ENCODE measurements at regions of chr2 and their contacts with region 1.

Region 1: GRCh38 chr2:189179570-189179950 is at the start of gene COL5A2:
- DNase-seq: peak; percentile 90
- H3K4me3 ChIP-seq: peak within 1 kb of the TSS; percentile 54 to 98 (median 76)
- H3K27ac ChIP-seq: peak within 1 kb of the TSS; percentile 65
- H3K4me1 ChIP-seq: peaks cover 15% of the 10 kb centered on the region
- H3K27me3 ChIP-seq: no peaks in the 10 kb centered on the region
- CTCF ChIP-seq: no peak
- POLR2A ChIP-seq: peak; percentile 88
- total RNA-seq, gene COL5A2: 123 and 138 TPM in 2 replicates

Region 2: DNA sequence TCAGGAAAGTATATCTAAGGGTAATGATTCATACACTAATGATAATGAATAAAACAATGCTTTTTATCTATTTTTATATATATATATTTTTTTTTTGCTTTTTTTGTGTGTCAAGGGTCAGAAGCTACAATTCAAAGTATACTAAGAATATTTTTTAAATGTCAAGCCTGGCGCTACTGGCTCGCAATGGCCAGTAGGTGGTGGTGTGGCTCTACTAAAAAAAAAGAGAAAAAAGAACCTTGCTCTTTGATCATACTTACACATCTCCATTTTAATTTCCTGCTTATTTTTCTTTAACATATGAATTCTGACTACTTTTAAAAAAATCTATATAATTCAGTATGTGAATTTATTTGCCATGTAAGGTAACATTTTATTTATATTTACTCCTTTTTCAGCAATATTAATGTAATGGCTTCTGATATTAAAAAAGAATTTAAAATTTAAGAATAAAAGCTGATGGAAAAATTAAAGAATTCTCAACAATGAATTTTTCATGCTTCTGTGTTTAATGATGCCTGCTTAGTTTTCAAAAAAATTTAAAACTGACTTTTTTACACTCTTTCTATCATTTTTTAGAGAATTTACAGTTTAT is 654.9 kb before region 1 on chr2:
- CTCF ChIA-PET with region 1: interaction called, 10 read pairs
- POLR2A ChIA-PET with region 1: no interaction called
- dilution Hi-C with region 1: no loop called
- intact Hi-C with region 1: no loop called
- DNase-seq: peak; percentile 65
- H3K4me3 ChIP-seq: no peak overlapping the region
- H3K27ac ChIP-seq: no peak overlapping the region
- H3K4me1 ChIP-seq: peaks cover 22% of the 10 kb centered on the region
- H3K27me3 ChIP-seq: no peaks in the 10 kb centered on the region
- CTCF ChIP-seq: peak; percentile 49 to 59
- POLR2A ChIP-seq: no peak

Region 3: DNA sequence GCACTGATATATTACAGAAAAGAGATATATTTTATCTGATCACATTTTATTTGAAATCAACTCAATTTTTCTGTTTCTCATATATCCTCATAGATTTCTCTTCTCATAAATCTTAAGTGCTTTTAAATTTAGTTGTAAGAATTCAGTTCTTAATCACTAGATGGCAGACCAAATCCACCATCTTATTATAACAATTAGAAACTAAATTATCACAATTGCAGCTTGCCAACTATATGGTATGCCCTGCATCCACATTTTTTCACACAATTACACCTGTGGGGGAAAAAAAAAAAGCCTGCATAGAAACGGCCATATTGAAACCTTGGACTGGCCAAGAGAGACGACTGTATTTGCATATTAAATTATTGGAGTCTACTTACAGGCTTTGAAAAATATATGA is 64.4 kb before region 1 on chr2:
- CTCF ChIA-PET with region 1: interaction called, 18 read pairs
- POLR2A ChIA-PET with region 1: no interaction called
- dilution Hi-C with region 1: no loop called
- intact Hi-C with region 1: no loop called
- DNase-seq: peak; percentile 50
- H3K4me3 ChIP-seq: no peak overlapping the region
- H3K27ac ChIP-seq: no peak overlapping the region
- H3K4me1 ChIP-seq: no peaks in the 10 kb centered on the region
- H3K27me3 ChIP-seq: no peaks in the 10 kb centered on the region
- CTCF ChIP-seq: no peak
- POLR2A ChIP-seq: no peak

Region 4: DNA sequence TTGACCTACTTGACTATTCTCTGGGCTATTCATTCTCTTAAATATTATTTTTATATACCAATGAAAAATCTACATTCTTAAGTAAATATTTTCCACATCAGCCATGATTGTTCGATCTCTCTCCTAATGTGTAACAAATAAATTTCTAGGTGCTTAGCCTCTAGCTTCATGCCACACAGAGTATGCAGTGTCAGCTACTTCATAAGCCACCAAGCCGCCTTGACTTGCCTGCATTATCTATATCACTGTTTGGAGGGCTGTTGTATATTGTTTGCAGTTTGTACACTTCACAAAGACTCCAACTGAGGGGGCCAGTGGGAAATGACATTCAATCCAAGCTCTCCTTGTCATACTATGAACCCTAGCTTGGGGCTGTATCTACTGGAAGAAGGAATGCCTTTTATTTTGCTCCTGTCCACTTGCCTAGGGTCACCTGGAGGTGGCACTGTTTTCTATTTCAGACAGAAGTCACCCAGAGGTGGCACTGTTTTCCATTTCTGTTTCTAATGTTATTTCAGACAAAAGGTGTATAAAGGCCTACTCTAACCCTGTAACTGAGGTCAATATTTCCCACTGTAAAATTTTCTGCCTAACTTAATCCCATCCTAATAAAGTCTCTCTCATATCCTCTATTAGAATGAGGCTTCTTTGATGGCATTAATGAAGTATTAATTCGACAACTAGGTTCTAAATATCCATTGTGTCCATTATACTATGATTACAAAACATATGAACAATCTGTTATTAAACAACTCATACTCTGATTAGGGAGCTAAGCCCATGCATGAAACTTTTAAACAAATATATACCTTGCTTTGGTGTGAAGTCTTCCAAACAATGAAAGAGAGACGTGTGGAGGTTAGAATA is 36.4 kb before region 1 on chr2:
- CTCF ChIA-PET with region 1: interaction called, 32 read pairs
- POLR2A ChIA-PET with region 1: no interaction called
- dilution Hi-C with region 1: no loop called
- intact Hi-C with region 1: loop called (anchors 2 kb)
- DNase-seq: peak; percentile 49
- H3K4me3 ChIP-seq: no peak overlapping the region
- H3K27ac ChIP-seq: no peak overlapping the region
- H3K4me1 ChIP-seq: no peaks in the 10 kb centered on the region
- H3K27me3 ChIP-seq: no peaks in the 10 kb centered on the region
- CTCF ChIP-seq: peak; percentile 69 to 88
- POLR2A ChIP-seq: no peak

Region 5: DNA sequence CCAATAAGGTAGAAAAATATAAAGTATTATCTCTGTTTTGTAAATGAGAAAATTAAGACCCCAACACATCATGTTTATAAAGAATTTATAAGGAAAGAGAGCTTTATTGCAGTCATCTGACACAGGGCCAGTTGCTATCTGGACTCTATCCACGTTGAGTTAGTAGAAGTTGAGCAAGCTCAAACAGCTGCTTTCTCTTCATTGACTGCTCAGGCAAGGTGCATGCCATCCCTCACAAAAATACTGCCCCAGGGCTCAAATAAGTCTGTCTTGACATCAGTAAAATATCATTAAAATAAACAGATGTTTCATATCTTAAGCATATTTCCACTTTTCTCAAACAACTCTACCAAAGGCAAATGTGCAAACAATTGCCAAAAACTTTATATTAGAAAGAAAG is 14.8 kb before region 1 on chr2:
- CTCF ChIA-PET with region 1: interaction called, 18 read pairs
- POLR2A ChIA-PET with region 1: interaction called, 3 read pairs
- dilution Hi-C with region 1: no loop called
- intact Hi-C with region 1: no loop called
- DNase-seq: no peak
- H3K4me3 ChIP-seq: no peak overlapping the region
- H3K27ac ChIP-seq: no peak overlapping the region
- H3K4me1 ChIP-seq: peaks cover 14% of the 10 kb centered on the region
- H3K27me3 ChIP-seq: no peaks in the 10 kb centered on the region
- CTCF ChIP-seq: no peak
- POLR2A ChIP-seq: no peak

Region 6: DNA sequence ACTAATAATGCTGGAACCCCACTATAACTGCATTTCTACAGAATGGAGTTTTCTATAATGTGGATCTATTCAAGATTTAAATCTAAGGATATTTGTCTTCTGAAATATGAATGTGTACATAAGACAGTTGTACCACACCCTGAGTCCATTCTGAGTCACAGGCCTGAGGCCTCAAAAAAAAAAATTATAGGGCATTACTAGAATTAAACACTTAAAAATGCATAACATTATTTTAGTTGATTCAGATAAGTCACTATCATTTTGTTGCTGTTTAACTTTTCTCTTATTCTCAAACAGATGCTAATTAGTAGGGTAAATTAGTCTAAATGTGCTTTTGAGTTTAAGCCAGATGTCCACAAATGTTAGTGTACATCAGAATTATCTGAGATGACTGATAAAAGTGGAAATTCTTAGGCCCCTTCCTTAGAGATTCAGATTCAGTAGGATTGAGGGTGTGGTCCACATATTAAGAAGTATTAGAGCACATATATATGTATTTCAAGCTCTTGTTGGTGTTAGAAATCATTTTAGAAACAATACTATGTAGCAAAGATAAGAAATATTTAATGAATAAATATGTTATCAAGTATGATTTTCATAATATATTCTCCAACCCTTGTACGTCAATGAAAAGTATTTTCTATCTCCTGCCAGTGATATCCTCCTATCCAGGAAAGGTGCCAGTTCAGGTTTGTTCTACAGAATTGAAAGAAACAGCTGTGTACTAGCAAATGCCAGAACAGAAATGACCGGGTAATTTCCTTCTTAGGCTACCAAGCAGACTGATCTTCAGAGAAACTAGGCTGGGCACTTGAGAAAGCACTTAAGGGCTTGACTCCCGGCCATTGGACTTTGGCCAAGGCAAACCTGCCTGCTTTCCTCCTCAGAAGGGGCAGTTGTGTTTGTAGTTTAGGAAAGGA is 42.6 kb after region 1 on chr2:
- CTCF ChIA-PET with region 1: interaction called, 30 read pairs
- POLR2A ChIA-PET with region 1: interaction called, 3 read pairs
- dilution Hi-C with region 1: no loop called
- intact Hi-C with region 1: no loop called
- DNase-seq: peak; percentile 91
- H3K4me3 ChIP-seq: no peak overlapping the region
- H3K27ac ChIP-seq: peak overlapping the region; percentile 32
- H3K4me1 ChIP-seq: peaks cover 21% of the 10 kb centered on the region
- H3K27me3 ChIP-seq: no peaks in the 10 kb centered on the region
- CTCF ChIP-seq: no peak
- POLR2A ChIP-seq: no peak

Region 7: DNA sequence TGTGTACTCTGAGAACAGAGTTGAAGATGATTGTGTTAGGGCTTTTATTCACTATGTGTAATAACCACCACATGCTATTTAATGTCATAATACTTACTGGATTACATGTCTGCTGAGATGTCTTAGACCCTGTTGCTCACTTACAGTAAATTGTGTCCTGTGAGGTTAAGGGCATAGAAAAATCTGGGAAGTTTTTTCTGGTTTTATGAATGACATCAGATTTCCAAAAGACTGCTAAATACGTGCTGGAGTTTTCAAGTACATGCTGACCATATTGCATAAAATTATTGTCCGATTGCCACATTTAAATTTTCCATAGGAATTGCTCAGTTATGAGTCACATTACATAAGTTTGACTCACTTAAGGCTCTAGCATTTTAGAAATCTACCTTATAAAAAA is 96.7 kb after region 1 on chr2:
- CTCF ChIA-PET with region 1: interaction called, 9 read pairs
- POLR2A ChIA-PET with region 1: no interaction called
- dilution Hi-C with region 1: no loop called
- intact Hi-C with region 1: loop called (anchors 2 kb)
- DNase-seq: peak; percentile 66
- H3K4me3 ChIP-seq: no peak overlapping the region
- H3K27ac ChIP-seq: no peak overlapping the region
- H3K4me1 ChIP-seq: peaks cover 8% of the 10 kb centered on the region
- H3K27me3 ChIP-seq: no peaks in the 10 kb centered on the region
- CTCF ChIP-seq: no peak
- POLR2A ChIP-seq: no peak

Region 8: DNA sequence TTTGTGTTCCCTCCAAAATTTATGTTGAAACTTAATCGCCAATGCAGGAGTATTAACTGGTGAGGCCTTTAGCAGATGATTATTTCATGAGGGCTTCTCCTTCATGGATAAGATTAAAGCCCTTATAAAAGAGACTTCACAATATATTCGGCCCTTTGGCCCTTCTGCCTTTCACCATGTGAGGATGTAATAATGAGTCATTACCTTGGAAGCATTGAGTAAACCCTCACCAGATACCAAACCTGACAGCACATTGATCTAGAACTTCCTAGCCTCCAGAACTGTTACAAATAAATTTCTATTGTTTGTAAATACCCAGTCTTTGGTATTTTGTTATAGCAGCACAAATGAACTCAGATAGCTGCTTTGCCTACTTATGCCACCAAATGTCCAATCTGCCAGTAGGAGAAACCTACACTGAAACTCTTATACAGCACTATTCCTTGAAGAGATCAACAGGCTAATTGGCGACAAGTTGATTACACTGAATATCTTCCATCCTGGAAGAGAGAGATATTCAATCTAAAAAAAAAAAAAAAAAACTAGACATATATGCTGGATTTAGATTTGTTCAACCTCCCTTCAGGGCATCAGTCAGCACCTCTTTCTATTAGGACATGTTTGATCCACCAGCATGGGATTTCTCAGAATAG is 125.9 kb after region 1 on chr2:
- CTCF ChIA-PET with region 1: no interaction called
- POLR2A ChIA-PET with region 1: no interaction called
- dilution Hi-C with region 1: no loop called
- intact Hi-C with region 1: no loop called
- DNase-seq: no peak
- H3K4me3 ChIP-seq: no peak overlapping the region
- H3K27ac ChIP-seq: no peak overlapping the region
- H3K4me1 ChIP-seq: no peaks in the 10 kb centered on the region
- H3K27me3 ChIP-seq: no peaks in the 10 kb centered on the region
- CTCF ChIP-seq: no peak
- POLR2A ChIP-seq: no peak

Region 9: GRCh38 chr2:189440947-189441708 is 261.6 kb after region 1 on chr2 and contains the start of gene WDR75:
- CTCF ChIA-PET with region 1: no interaction called
- POLR2A ChIA-PET with region 1: no interaction called
- dilution Hi-C with region 1: no loop called
- intact Hi-C with region 1: no loop called
- DNase-seq: peak; percentile 95
- H3K4me3 ChIP-seq: peak within 1 kb of the TSS; percentile 88 to 95 (median 93)
- H3K27ac ChIP-seq: peak within 1 kb of the TSS; percentile 77
- H3K4me1 ChIP-seq: peaks cover 16% of the 10 kb centered on the region
- H3K27me3 ChIP-seq: no peaks in the 10 kb centered on the region
- CTCF ChIP-seq: no peak
- POLR2A ChIP-seq: peak; percentile 95
- total RNA-seq, gene WDR75: 41.7 and 44.8 TPM in 2 replicates

Measured in endothelial cell of umbilical vein (primary cell).